H1 (cell line): ENCODE measurements at regions of chr15 and their contacts with region 1.

Region 1: DNA sequence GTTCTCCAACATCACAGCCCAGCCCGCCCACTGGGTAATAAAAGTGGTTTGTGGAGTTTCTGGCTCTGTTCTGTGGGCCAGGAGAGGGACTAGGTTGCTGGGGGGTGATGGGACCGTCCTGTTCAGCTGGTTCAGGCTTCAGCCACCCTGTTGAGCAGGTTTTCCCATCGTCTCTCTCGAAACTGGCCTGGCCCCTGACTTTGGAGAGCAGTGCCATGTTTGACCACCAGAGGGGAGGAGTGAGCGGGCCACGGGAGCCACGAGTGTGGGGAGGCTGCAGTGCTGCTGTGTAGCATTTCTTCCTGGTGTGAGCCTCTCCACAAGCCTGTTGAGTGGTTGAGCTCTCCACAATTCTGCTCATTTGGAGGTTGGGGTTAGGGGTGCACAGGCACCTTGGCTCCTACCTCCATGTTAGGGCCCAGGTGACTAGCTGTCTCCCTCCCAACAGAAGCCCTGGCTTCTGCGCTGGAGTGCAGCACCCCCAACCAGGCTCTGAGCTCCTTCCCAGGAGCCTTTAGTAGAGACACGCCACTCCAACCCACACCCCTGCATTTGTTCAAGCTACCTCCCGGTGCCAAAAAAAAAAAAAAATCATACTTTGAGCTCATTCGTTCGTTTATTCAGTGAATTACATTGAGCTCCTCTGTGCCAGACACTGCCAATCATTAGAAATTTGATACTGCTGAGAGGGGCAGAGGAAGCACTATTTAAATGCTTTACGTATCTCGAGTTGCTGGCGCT is 13.9 kb downstream of the SPINT1 start:
- DNase-seq: peak in 1 of 2 experiments; percentile 99
- H3K4me3 ChIP-seq: no peak overlapping the region
- H3K27ac ChIP-seq: no peak overlapping the region
- H3K4me1 ChIP-seq: peaks cover 0 to 3% (median 0%) of the 10 kb centered on the region in 4 experiments; a peak in 1 of 7 replicates
- H3K27me3 ChIP-seq: no peaks in the 10 kb centered on the region
- CTCF ChIP-seq: peak; percentile 95 to 99 (median 99)
- EP300 ChIP-seq: peak in 1 of 2 experiments; percentile 19; a peak in 1 of 3 replicates
- POLR2A ChIP-seq: no peak; a peak in 1 of 3 replicates
- RAD21 ChIP-seq: peak; percentile 73 to 82

Region 2: GRCh38 chr15:40743921-40744814 is 113.6 kb before region 1 on chr15:
- CTCF ChIA-PET with region 1: interaction called, 32 read pairs
- POLR2A ChIA-PET with region 1: no interaction called
- DNase-seq: no peak
- H3K4me3 ChIP-seq: no peak overlapping the region
- H3K27ac ChIP-seq: no peak overlapping the region
- H3K4me1 ChIP-seq: peaks cover 9 to 16% (median 10%) of the 10 kb centered on the region in 4 experiments
- H3K27me3 ChIP-seq: no peaks in the 10 kb centered on the region
- CTCF ChIP-seq: peak in 2 of 3 experiments; percentile 10 to 15; a peak in 2 of 4 replicates
- EP300 ChIP-seq: no peak
- POLR2A ChIP-seq: no peak
- RAD21 ChIP-seq: peak in 1 of 2 experiments; percentile 9; a peak in 1 of 4 replicates

Region 3: DNA sequence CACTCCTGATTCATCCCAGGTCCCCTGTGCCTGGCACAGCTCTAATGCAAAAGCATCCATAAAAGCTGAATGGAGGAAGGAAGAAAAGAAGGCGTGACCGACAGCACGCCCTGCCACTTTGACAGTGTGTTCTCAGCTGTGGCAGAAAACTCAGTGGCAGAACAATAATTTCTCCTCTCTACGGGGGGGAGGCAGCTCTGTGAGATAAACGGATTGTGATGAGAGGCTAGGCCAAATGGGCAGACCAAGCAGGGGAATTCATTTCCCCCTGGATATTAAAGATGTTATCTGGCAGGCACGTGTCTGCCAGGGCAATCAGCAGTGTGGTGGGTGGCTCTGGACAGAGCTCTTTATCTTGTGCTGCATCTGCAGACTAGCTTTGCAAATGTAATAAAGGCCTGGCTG is 100.9 kb before region 1 on chr15:
- CTCF ChIA-PET with region 1: interaction called, 10 read pairs
- POLR2A ChIA-PET with region 1: interaction called, 4 read pairs
- DNase-seq: no peak
- H3K4me3 ChIP-seq: no peak overlapping the region
- H3K27ac ChIP-seq: no peak overlapping the region
- H3K4me1 ChIP-seq: 0 out of 7 replicates have a peak, but pooled peaks cover 0 to 2% (median under 1%) of the 10 kb centered on the region in 4 experiments
- H3K27me3 ChIP-seq: no peaks in the 10 kb centered on the region
- CTCF ChIP-seq: no peak
- EP300 ChIP-seq: no peak
- POLR2A ChIP-seq: no peak
- RAD21 ChIP-seq: no peak

Region 4: GRCh38 chr15:40763801-40764732 is 93.7 kb before region 1 on chr15 and contains the start of gene GCHFR:
- CTCF ChIA-PET with region 1: interaction called, 43 read pairs
- POLR2A ChIA-PET with region 1: interaction called, 6 read pairs
- DNase-seq: peak in 1 of 2 experiments; percentile 86
- H3K4me3 ChIP-seq: peak within 1 kb of the TSS; percentile 44 to 81 (median 74)
- H3K27ac ChIP-seq: no peak within 1 kb of the TSS
- H3K4me1 ChIP-seq: peaks cover 6 to 30% (median 19%) of the 10 kb centered on the region in 4 experiments
- H3K27me3 ChIP-seq: peaks cover 0 to 7% (median 3%) of the 10 kb centered on the region in 4 experiments; a peak in 5 of 7 replicates
- CTCF ChIP-seq: peak; percentile 26 to 30 (median 29)
- EP300 ChIP-seq: no peak
- POLR2A ChIP-seq: peak in 1 of 2 experiments; percentile 53; a peak in 1 of 3 replicates
- RAD21 ChIP-seq: no peak; a peak in 1 of 4 replicates
- total RNA-seq, gene GCHFR: 22.7 and 25.9 TPM in 2 replicates

Region 5: GRCh38 chr15:40782580-40783227 is 75.1 kb before region 1 on chr15:
- CTCF ChIA-PET with region 1: interaction called, 73 read pairs
- POLR2A ChIA-PET with region 1: interaction called, 5 read pairs
- DNase-seq: peak; percentile 46 to 64
- H3K4me3 ChIP-seq: no peak overlapping the region
- H3K27ac ChIP-seq: no peak overlapping the region
- H3K4me1 ChIP-seq: peaks cover 8 to 23% (median 13%) of the 10 kb centered on the region in 4 experiments; a peak in 6 of 7 replicates
- H3K27me3 ChIP-seq: no peaks in the 10 kb centered on the region
- CTCF ChIP-seq: peak; percentile 77 to 79 (median 79)
- EP300 ChIP-seq: no peak
- POLR2A ChIP-seq: no peak
- RAD21 ChIP-seq: peak; percentile 73 to 83

Region 6: GRCh38 chr15:40825661-40826088 is 32.1 kb before region 1 on chr15:
- CTCF ChIA-PET with region 1: interaction called, 18 read pairs
- POLR2A ChIA-PET with region 1: interaction called, 5 read pairs
- DNase-seq: no peak
- H3K4me3 ChIP-seq: no peak overlapping the region
- H3K27ac ChIP-seq: no peak overlapping the region
- H3K4me1 ChIP-seq: no peaks in the 10 kb centered on the region
- H3K27me3 ChIP-seq: no peaks in the 10 kb centered on the region
- CTCF ChIP-seq: no peak
- EP300 ChIP-seq: no peak
- POLR2A ChIP-seq: no peak
- RAD21 ChIP-seq: no peak

Region 7: GRCh38 chr15:40847205-40847961 is 10.4 kb before region 1 on chr15:
- CTCF ChIA-PET with region 1: interaction called, 157 read pairs
- POLR2A ChIA-PET with region 1: interaction called, 37 read pairs
- DNase-seq: no peak
- H3K4me3 ChIP-seq: peak overlapping the region in 1 of 4 experiments; percentile 84; a peak in 2 of 8 replicates
- H3K27ac ChIP-seq: no peak overlapping the region
- H3K4me1 ChIP-seq: peaks cover 0 to 26% (median 15%) of the 10 kb centered on the region in 4 experiments; a peak in 6 of 7 replicates
- H3K27me3 ChIP-seq: peaks cover 0 to 2% (median 0%) of the 10 kb centered on the region in 4 experiments; a peak in 1 of 7 replicates
- CTCF ChIP-seq: no peak
- EP300 ChIP-seq: no peak
- POLR2A ChIP-seq: no peak
- RAD21 ChIP-seq: no peak

Region 8: DNA sequence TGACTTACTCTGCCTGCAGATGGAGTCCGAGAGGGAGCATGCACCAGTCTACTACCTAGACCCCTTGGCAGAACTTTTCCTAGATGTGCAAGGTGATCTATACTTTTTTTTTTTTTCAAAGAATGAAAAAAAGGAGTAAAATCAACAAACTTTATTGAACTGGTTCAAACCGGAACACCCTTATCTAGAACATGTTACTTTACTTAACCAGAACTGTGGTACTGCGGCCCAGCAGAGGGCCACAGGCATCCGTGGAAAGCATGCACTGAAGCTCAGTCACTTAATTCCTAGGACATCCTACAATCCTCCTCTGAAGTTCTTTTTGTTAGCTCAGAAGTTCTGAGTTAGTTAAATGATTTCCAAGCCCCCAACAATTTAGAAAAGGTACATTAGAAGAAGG is 117.1 kb after region 1 on chr15:
- CTCF ChIA-PET with region 1: no interaction called
- POLR2A ChIA-PET with region 1: no interaction called
- DNase-seq: no peak
- H3K4me3 ChIP-seq: no peak overlapping the region
- H3K27ac ChIP-seq: no peak overlapping the region
- H3K4me1 ChIP-seq: peaks cover 0 to 2% (median 0%) of the 10 kb centered on the region in 4 experiments; a peak in 1 of 7 replicates
- H3K27me3 ChIP-seq: no peaks in the 10 kb centered on the region
- CTCF ChIP-seq: no peak
- EP300 ChIP-seq: no peak
- POLR2A ChIP-seq: no peak
- RAD21 ChIP-seq: no peak; a peak in 1 of 4 replicates

Region 9: GRCh38 chr15:40999190-40999589 is 141.4 kb after region 1 on chr15:
- CTCF ChIA-PET with region 1: no interaction called
- POLR2A ChIA-PET with region 1: no interaction called
- DNase-seq: no peak
- H3K4me3 ChIP-seq: no peak overlapping the region
- H3K27ac ChIP-seq: no peak overlapping the region
- H3K4me1 ChIP-seq: no peaks in the 10 kb centered on the region
- H3K27me3 ChIP-seq: no peaks in the 10 kb centered on the region
- CTCF ChIP-seq: no peak
- EP300 ChIP-seq: no peak
- POLR2A ChIP-seq: no peak
- RAD21 ChIP-seq: no peak